ENCODE measurements at regions of chr9 and their contacts with region 1.

Region 1: DNA sequence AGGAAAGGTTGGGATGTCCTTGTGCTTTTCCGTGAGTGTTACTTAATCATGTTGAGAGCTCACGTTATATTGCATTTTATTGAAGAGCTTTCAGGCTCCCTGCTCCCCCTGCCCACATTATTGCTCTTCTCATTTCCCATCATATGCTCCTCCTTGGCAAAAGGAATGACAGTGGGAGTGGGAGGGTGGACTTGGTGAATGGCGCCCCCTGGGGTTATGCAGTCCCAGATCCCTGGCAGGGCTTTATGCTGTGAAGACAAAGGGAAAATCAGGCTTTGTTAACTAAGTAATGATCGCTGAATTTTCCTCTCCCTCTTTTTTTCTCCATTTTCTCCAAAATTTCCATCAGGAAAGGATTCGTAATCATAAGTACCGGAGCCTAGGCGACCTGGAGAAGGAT is 166.6 kb downstream of the SMARCA2 start:
- DNase-seq: peak; percentile 30
- ATAC-seq: no peak
- H3K4me3 Mint-ChIP-seq: no peak overlapping the region
- H3K27ac Mint-ChIP-seq: no peak overlapping the region
- H3K4me1 Mint-ChIP-seq: peaks cover 9% of the 10 kb centered on the region
- H3K27me3 Mint-ChIP-seq: no peaks in the 10 kb centered on the region
- CTCF ChIP-seq: peak; percentile 43

Region 2: DNA sequence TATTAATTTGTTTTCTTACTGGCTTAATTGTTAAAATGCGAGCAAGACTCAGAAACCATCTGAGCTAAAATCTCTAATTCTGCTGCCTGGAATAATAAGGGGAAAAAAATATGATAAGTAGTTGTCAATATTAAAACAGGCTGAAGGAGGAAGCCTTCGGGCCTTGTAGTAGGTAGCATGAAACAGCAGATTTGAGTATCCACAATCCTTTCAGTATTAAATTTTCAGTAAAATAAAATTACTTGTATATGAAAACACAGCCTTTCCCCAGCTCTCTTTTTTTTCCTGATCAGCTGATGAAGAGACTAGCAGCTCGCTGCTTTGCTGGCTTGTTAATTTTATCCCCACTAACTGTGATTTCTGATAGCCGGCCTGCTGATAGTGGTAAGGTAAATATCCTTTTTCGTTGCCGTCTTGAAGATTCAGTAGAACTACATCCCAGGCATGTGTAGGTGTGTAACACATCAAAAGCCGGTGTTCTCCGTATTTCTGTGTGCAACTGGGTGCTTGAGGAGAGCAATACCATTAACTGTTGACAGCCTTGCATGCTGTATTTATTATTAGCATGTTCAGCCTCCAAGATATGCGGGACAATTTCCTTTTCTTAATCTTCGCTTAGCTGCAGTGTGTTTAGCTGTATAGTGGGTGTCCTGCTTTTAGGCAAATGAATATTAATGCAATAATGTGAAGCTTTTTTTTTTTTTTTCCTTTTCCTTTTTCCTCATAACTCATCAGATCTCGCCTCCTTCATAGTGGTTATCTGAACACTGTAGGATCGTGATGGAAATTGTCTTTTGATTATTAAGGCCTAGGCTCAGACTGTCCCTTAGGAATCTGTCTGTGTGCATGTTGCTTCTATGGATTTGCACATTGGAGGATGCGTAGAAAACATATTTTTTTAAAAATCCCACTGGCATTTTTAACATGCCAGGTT is 22.0 kb before region 1 on chr9:
- CTCF ChIA-PET with region 1: interaction called, 16 read pairs
- POLR2A ChIA-PET with region 1: no interaction called
- intact Hi-C with region 1: no loop called
- DNase-seq: no peak
- ATAC-seq: no peak
- H3K4me3 Mint-ChIP-seq: peak overlapping the region; percentile 81
- H3K27ac Mint-ChIP-seq: peak overlapping the region; percentile 67
- H3K4me1 Mint-ChIP-seq: peaks cover 49% of the 10 kb centered on the region
- H3K27me3 Mint-ChIP-seq: no peaks in the 10 kb centered on the region
- CTCF ChIP-seq: no peak

Region 3: GRCh38 chr9:2166203-2166602 is 15.6 kb before region 1 on chr9:
- CTCF ChIA-PET with region 1: interaction called, 16 read pairs
- POLR2A ChIA-PET with region 1: no interaction called
- intact Hi-C with region 1: no loop called
- DNase-seq: no peak
- ATAC-seq: no peak
- H3K4me3 Mint-ChIP-seq: no peak overlapping the region
- H3K27ac Mint-ChIP-seq: no peak overlapping the region
- H3K4me1 Mint-ChIP-seq: peaks cover 19% of the 10 kb centered on the region
- H3K27me3 Mint-ChIP-seq: no peaks in the 10 kb centered on the region
- CTCF ChIP-seq: no peak

Region 4: DNA sequence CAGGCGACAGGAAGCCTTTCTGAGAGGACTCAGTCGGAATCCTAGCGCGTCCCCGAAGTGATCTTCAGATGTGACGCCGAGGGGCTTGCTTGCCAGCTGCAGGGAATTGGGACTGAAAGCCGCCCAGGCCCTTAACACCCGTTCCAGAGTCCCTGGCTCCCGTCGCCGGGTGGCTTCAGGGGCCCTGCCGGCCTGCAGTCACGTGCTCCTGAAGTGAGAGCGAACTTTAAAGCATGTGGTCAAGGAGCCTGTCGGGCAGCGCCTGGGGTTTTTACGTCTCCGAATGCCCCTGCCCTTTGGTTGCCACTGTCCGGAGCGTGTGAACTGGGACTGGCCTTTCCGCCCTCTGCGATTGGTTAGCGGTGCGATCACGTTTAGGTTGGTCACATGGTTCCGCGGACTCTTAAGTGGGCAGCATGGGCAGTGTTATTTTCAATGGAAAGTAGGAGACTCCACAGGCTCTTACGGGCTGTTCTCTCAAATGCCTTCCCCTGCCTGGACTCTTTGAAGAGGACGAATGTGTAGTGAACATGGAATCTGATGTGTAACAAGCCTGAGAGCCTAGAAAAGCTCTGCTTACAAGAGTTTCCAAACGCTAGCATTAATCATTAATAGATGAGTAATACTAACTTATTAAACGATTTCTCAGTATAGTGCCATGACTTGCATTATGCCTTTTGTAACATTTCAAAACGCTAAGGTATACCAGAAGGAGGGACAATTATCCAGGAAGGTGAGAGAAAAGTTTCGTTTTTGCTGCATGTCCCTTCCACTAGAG is 441.7 kb after region 1 on chr9:
- CTCF ChIA-PET with region 1: no interaction called
- POLR2A ChIA-PET with region 1: no interaction called
- intact Hi-C with region 1: no loop called
- DNase-seq: peak; percentile 7
- ATAC-seq: no peak
- H3K4me3 Mint-ChIP-seq: peak overlapping the region; percentile 88
- H3K27ac Mint-ChIP-seq: no peak overlapping the region
- H3K4me1 Mint-ChIP-seq: peaks cover 8% of the 10 kb centered on the region
- H3K27me3 Mint-ChIP-seq: peaks cover 67% of the 10 kb centered on the region
- CTCF ChIP-seq: no peak

Measured in activated CD8-positive, alpha-beta T cell treated with anti-CD3 and anti-CD28 coated beads for 36 hours (primary cell).